ENCODE measurements at regions of chr1 and their contacts with region 1.

Region 1: DNA sequence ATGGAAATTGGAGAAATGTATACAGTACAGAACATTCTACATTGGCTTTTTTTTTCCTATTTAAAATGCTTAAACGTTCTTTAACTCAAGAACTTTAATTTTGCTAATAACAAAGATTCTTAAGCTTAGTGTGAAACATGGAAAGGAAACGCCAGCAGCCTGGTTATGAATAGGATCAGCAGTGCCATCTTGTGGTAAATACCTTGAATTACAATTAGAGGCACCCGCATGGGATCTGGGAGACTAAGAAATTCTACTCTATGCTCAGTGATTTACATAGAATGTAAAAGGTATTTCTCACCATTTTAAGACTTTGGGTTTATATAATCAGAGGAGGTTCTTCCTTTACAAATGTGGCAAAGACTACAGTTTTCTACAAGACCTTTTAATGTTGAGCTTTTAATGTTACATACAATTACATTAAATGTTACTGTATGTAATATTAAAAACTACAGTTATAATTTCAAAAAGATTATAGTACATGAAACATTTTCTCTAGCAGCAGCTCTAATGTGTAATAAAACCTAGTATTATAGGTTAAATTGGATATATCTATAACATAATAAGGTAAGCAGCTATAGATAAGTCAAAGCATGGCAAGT is 32.1 kb upstream of the APOBEC4 start:
- DNase-seq: peak; percentile 11
- ATAC-seq: peak; percentile 75
- H3K4me3 ChIP-seq: no peak overlapping the region
- H3K27ac ChIP-seq: no peak overlapping the region
- H3K4me1 ChIP-seq: 0 out of 2 replicates have a peak, but pooled peaks cover 2% of the 10 kb centered on the region
- H3K27me3 ChIP-seq: no peaks in the 10 kb centered on the region
- CTCF ChIP-seq: peak; percentile 60 to 77 (median 65)
- EP300 ChIP-seq: no peak
- POLR2A ChIP-seq: no peak
- RAD21 ChIP-seq: peak; percentile 81

Region 2: GRCh38 chr1:183471743-183472487 is 213.3 kb before region 1 on chr1:
- CTCF ChIA-PET with region 1: interaction called, 6 read pairs
- POLR2A ChIA-PET with region 1: no interaction called
- RAD21 ChIA-PET with region 1: no interaction called
- SMC1A ChIA-PET with region 1: no interaction called
- in situ Hi-C with region 1: no loop called
- intact Hi-C with region 1: loop called (anchors 5 kb)
- DNase-seq: peak; percentile 90
- ATAC-seq: peak; percentile 69
- H3K4me3 ChIP-seq: peak overlapping the region; percentile 87
- H3K27ac ChIP-seq: peak overlapping the region; percentile 99
- H3K4me1 ChIP-seq: peaks cover 8% of the 10 kb centered on the region
- H3K27me3 ChIP-seq: no peaks in the 10 kb centered on the region
- CTCF ChIP-seq: peak in 2 of 3 experiments; percentile 21 to 38; a peak in 3 of 6 replicates
- EP300 ChIP-seq: no peak
- POLR2A ChIP-seq: peak; percentile 56
- RAD21 ChIP-seq: no peak

Region 3: GRCh38 chr1:183609313-183609712 is 75.9 kb before region 1 on chr1:
- CTCF ChIA-PET with region 1: interaction called, 16 read pairs
- POLR2A ChIA-PET with region 1: no interaction called
- RAD21 ChIA-PET with region 1: interaction called, 21 read pairs
- SMC1A ChIA-PET with region 1: interaction called, 18 read pairs
- in situ Hi-C with region 1: no loop called
- intact Hi-C with region 1: no loop called
- DNase-seq: no peak
- ATAC-seq: peak; percentile 62
- H3K4me3 ChIP-seq: no peak overlapping the region
- H3K27ac ChIP-seq: peak overlapping the region; percentile 53
- H3K4me1 ChIP-seq: peaks cover 46% of the 10 kb centered on the region
- H3K27me3 ChIP-seq: no peaks in the 10 kb centered on the region
- CTCF ChIP-seq: peak; percentile 69 to 76 (median 72)
- EP300 ChIP-seq: peak in 1 of 2 experiments; percentile 57; a peak in 1 of 4 replicates
- POLR2A ChIP-seq: no peak
- RAD21 ChIP-seq: peak; percentile 70

Region 4: GRCh38 chr1:183635606-183636333 is 49.4 kb before region 1 on chr1 and contains the start of gene ARPC5:
- CTCF ChIA-PET with region 1: interaction called, 40 read pairs
- POLR2A ChIA-PET with region 1: interaction called, 6 read pairs
- RAD21 ChIA-PET with region 1: interaction called, 31 read pairs
- SMC1A ChIA-PET with region 1: interaction called, 30 read pairs
- in situ Hi-C with region 1: no loop called
- intact Hi-C with region 1: no loop called
- DNase-seq: peak; percentile 95
- ATAC-seq: peak; percentile 86
- H3K4me3 ChIP-seq: peak within 1 kb of the TSS; percentile 93
- H3K27ac ChIP-seq: peak within 1 kb of the TSS; percentile 96
- H3K4me1 ChIP-seq: 0 out of 2 replicates have a peak, but pooled peaks cover 3% of the 10 kb centered on the region
- H3K27me3 ChIP-seq: no peaks in the 10 kb centered on the region
- CTCF ChIP-seq: no peak
- EP300 ChIP-seq: no peak
- POLR2A ChIP-seq: peak; percentile 93
- RAD21 ChIP-seq: no peak
- polyA plus RNA-seq, gene ARPC5: 246 to 274 TPM

Region 5: GRCh38 chr1:183711741-183712361 is 26.6 kb after region 1 on chr1:
- CTCF ChIA-PET with region 1: interaction called, 12 read pairs
- POLR2A ChIA-PET with region 1: no interaction called
- RAD21 ChIA-PET with region 1: no interaction called
- SMC1A ChIA-PET with region 1: interaction called, 3 read pairs
- in situ Hi-C with region 1: no loop called
- intact Hi-C with region 1: no loop called
- DNase-seq: no peak
- ATAC-seq: no peak
- H3K4me3 ChIP-seq: no peak overlapping the region
- H3K27ac ChIP-seq: no peak overlapping the region
- H3K4me1 ChIP-seq: peaks cover 4% of the 10 kb centered on the region; the same call in 1 of the 2 replicates
- H3K27me3 ChIP-seq: no peaks in the 10 kb centered on the region
- CTCF ChIP-seq: no peak
- EP300 ChIP-seq: no peak
- POLR2A ChIP-seq: no peak
- RAD21 ChIP-seq: no peak

Region 6: GRCh38 chr1:183841950-183842794 is 157.0 kb after region 1 on chr1:
- CTCF ChIA-PET with region 1: interaction called, 4 read pairs
- POLR2A ChIA-PET with region 1: no interaction called
- RAD21 ChIA-PET with region 1: no interaction called
- SMC1A ChIA-PET with region 1: interaction called, 9 read pairs
- in situ Hi-C with region 1: no loop called
- intact Hi-C with region 1: loop called (anchors 1 kb)
- DNase-seq: peak; percentile 85
- ATAC-seq: peak; percentile 93
- H3K4me3 ChIP-seq: peak overlapping the region; percentile 12
- H3K27ac ChIP-seq: peak overlapping the region; percentile 99
- H3K4me1 ChIP-seq: peaks cover 46% of the 10 kb centered on the region
- H3K27me3 ChIP-seq: no peaks in the 10 kb centered on the region
- CTCF ChIP-seq: no peak
- EP300 ChIP-seq: peak; percentile 74 to 75; a peak in 3 of 4 replicates
- POLR2A ChIP-seq: peak; percentile 53; the same call in 1 of the 2 replicates
- RAD21 ChIP-seq: 0 out of 2 replicates have a peak, but pooled peaks have one; percentile 22